ENCODE measurements at regions of chr2 and their contacts with region 1.

Region 1: DNA sequence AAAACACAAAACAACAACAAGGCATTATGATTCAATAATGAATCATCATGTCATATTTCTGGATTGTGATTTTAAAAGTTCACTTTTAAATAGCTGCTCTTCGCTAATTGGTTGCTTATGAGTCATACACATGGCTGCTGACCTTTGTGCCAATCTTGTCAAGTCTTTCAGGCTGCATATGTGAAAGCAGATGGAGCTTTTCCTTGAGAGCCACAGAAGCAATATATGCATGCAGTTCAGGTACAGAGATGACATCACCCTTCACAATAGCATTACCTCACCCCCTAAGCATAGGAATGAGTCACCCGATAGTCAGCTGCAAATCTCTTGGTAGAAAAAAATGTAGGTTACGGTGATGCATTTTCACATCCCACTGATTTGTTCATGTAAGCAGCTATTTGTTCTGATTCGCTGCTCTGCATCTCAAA is 27.2 kb downstream of the EIF2AK3 start:
- DNase-seq: peak; percentile 98
- ATAC-seq: peak; percentile 97
- H3K4me3 ChIP-seq: peak overlapping the region; percentile 14; the same call in 1 of the 2 replicates
- H3K27ac ChIP-seq: peak overlapping the region; percentile 61
- H3K4me1 ChIP-seq: peaks cover 36% of the 10 kb centered on the region
- H3K27me3 ChIP-seq: no peaks in the 10 kb centered on the region
- CTCF ChIP-seq: no peak
- EP300 ChIP-seq: peak; percentile 86 to 96
- POLR2A ChIP-seq: no peak
- RAD21 ChIP-seq: 0 out of 2 replicates have a peak, but pooled peaks have one; percentile 4

Region 2: DNA sequence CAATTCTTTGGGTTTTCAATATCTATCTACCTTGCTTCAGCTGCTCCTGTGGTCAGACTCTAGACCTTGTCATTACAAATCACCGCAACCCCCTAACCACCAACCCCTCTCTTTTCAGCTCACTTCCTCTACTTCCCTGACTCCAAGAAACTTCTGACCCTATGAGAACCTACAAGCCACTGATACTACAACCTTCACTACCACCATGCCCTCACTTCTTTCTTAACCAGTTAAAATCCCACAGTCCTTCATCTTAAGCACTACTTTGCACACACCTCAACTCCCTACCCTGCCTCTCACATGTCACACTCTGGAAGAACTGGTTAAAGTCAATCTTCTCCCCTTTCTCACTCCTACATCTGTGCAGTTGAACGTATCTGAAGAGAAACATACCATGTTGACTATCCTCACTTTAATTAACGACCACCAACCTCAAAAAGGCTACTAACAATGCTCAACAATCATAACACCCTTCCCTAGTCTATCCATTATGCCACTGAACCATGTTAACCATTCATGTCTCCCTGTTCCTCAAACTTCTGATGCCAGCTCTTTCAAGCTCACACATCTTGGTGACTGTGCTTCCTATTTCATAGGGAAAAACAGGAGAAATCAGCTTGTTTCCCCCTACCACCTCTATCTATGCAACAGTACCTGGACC is 14.6 kb after region 1 on chr2:
- CTCF ChIA-PET with region 1: interaction called, 5 read pairs
- POLR2A ChIA-PET with region 1: interaction called, 62 read pairs
- RAD21 ChIA-PET with region 1: interaction called, 13 read pairs
- SMC1A ChIA-PET with region 1: interaction called, 231 read pairs
- in situ Hi-C with region 1: no loop called
- intact Hi-C with region 1: loop called (anchors 1 kb)
- DNase-seq: peak; percentile 76
- ATAC-seq: peak; percentile 81
- H3K4me3 ChIP-seq: peak overlapping the region; percentile 8
- H3K27ac ChIP-seq: peak overlapping the region; percentile 80
- H3K4me1 ChIP-seq: peaks cover 36% of the 10 kb centered on the region
- H3K27me3 ChIP-seq: no peaks in the 10 kb centered on the region
- CTCF ChIP-seq: no peak
- EP300 ChIP-seq: peak; percentile 61 to 71; a peak in 3 of 4 replicates
- POLR2A ChIP-seq: no peak
- RAD21 ChIP-seq: no peak

Region 3: GRCh38 chr2:88620015-88620414 is 20.0 kb after region 1 on chr2:
- CTCF ChIA-PET with region 1: interaction called, 36 read pairs
- POLR2A ChIA-PET with region 1: interaction called, 62 read pairs
- RAD21 ChIA-PET with region 1: interaction called, 13 read pairs
- SMC1A ChIA-PET with region 1: interaction called, 231 read pairs
- in situ Hi-C with region 1: no loop called
- intact Hi-C with region 1: no loop called
- DNase-seq: no peak
- ATAC-seq: no peak
- H3K4me3 ChIP-seq: no peak overlapping the region
- H3K27ac ChIP-seq: no peak overlapping the region
- H3K4me1 ChIP-seq: peaks cover 32% of the 10 kb centered on the region
- H3K27me3 ChIP-seq: no peaks in the 10 kb centered on the region
- CTCF ChIP-seq: no peak
- EP300 ChIP-seq: no peak
- POLR2A ChIP-seq: no peak
- RAD21 ChIP-seq: no peak

Region 4: DNA sequence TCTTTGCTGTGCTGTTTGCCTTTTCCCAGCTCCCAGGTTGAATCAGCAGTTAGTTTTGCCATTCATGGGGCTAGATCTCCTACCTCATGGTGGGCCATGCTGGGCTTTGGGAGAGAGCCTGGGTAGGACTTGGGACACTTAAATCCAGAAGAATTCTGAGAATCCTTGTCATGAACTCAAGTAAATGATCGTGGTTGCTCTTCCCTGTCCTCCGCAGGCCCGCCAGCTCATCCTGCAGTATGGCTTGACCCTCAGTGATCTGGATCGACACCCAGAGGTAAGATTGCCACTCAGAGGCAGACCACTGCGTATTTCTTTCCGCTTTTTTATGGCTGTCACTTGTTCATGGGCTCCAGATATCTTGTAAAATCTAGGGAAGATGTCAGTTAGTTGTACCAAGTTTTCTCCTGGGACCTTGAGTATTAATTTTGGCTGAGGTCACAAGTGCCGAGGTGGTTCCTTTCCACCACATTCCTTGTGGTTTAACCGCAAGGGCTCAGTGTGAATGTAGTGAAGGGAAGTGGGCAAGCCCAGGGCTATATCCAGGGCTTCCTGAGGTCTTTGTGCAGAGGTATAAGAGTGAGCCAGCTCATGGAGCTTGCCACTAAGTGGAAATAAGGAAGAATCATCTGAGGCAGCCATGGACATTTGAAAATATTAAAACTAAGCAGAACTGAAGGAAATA is 129.2 kb after region 1 on chr2:
- CTCF ChIA-PET with region 1: no interaction called
- POLR2A ChIA-PET with region 1: no interaction called
- RAD21 ChIA-PET with region 1: no interaction called
- SMC1A ChIA-PET with region 1: no interaction called
- in situ Hi-C with region 1: no loop called
- intact Hi-C with region 1: no loop called
- DNase-seq: no peak
- ATAC-seq: no peak
- H3K4me3 ChIP-seq: no peak overlapping the region
- H3K27ac ChIP-seq: no peak overlapping the region
- H3K4me1 ChIP-seq: no peaks in the 10 kb centered on the region
- H3K27me3 ChIP-seq: no peaks in the 10 kb centered on the region
- CTCF ChIP-seq: no peak
- EP300 ChIP-seq: no peak
- POLR2A ChIP-seq: no peak
- RAD21 ChIP-seq: no peak